ENCODE measurements at regions of chr6 and their contacts with region 1.

Region 1: GRCh38 chr6:155327326-155328073 is 13.2 kb upstream of the TFB1M start:
- DNase-seq: peak in 2 of 4 donors; percentile 77 to 88
- ATAC-seq: peak; percentile 91
- H3K4me3 ChIP-seq: no peak overlapping the region
- H3K27ac ChIP-seq: no peak overlapping the region
- H3K4me1 ChIP-seq: peaks cover 0 to 3% of the 10 kb centered on the region in 2 donors
- H3K27me3 ChIP-seq: no peaks in the 10 kb centered on the region
- CTCF ChIP-seq: peak; percentile 73 to 80

Region 2: GRCh38 chr6:155530219-155530834 is 202.8 kb after region 1 on chr6:
- intact Hi-C with region 1: loop called in 1 of 2 experiments (anchors 5 kb)
- DNase-seq: peak in 2 of 4 donors; percentile 24 to 36
- ATAC-seq: peak; percentile 76
- H3K4me3 ChIP-seq: no peak overlapping the region
- H3K27ac ChIP-seq: no peak overlapping the region
- H3K4me1 ChIP-seq: peaks cover 0 to 15% of the 10 kb centered on the region in 2 donors
- H3K27me3 ChIP-seq: no peaks in the 10 kb centered on the region
- CTCF ChIP-seq: peak; percentile 51 to 55